Activated B cell treated with CpG ODN at 0.5 μM for 24 hours (primary cell): ENCODE measurements at regions of chr7 and their contacts with region 1.

Region 1: GRCh38 chr7:74094224-74095101 is 10.9 kb downstream of the LIMK1 start:
- DNase-seq: peak; percentile 46
- ATAC-seq: peak; percentile 72
- H3K4me3 Mint-ChIP-seq: peak overlapping the region; percentile 90
- H3K27ac Mint-ChIP-seq: peak overlapping the region; percentile 95
- H3K4me1 Mint-ChIP-seq: peaks cover 47% of the 10 kb centered on the region
- H3K27me3 Mint-ChIP-seq: no peaks in the 10 kb centered on the region
- CTCF ChIP-seq: no peak

Region 2: GRCh38 chr7:74083117-74083876 is 11.2 kb before region 1 on chr7 and contains the start of gene LIMK1:
- CTCF ChIA-PET with region 1: no interaction called
- POLR2A ChIA-PET with region 1: interaction called, 59 read pairs
- intact Hi-C with region 1: loop called (anchors 1 kb)
- DNase-seq: peak; percentile 86
- ATAC-seq: peak; percentile 95
- H3K4me3 Mint-ChIP-seq: peak within 1 kb of the TSS; percentile 84
- H3K27ac Mint-ChIP-seq: peak within 1 kb of the TSS; percentile 53
- H3K4me1 Mint-ChIP-seq: peaks cover 7% of the 10 kb centered on the region
- H3K27me3 Mint-ChIP-seq: no peaks in the 10 kb centered on the region
- CTCF ChIP-seq: no peak
- total RNA-seq, gene LIMK1: 59.6 and 62.7 TPM in 2 replicates

Region 3: DNA sequence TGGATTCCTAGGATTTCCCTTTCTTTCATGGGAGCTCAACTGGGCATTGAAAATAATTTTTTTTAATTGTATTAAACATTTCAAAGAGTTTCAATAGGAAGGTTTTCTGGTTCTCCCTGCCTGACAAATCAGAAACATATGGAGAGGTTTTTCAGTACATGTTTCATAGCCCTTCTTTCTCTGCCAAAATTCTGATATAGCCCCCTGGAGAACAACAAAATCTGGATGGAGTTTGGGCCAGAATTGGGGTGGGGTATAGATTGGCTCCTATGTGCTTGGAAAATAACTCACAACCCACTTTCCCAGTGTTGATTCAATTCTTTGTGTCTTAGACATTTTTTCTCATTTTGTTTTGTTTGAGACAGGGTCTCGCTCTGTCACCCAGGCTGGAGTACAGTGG is 55.1 kb after region 1 on chr7:
- CTCF ChIA-PET with region 1: no interaction called
- POLR2A ChIA-PET with region 1: interaction called, 12 read pairs
- intact Hi-C with region 1: no loop called
- DNase-seq: no peak
- ATAC-seq: no peak
- H3K4me3 Mint-ChIP-seq: no peak overlapping the region
- H3K27ac Mint-ChIP-seq: no peak overlapping the region
- H3K4me1 Mint-ChIP-seq: peaks cover 4% of the 10 kb centered on the region
- H3K27me3 Mint-ChIP-seq: peaks cover 2% of the 10 kb centered on the region
- CTCF ChIP-seq: no peak